A549 (cell line): ENCODE measurements at regions of chr17 and their contacts with region 1.

Region 1: DNA sequence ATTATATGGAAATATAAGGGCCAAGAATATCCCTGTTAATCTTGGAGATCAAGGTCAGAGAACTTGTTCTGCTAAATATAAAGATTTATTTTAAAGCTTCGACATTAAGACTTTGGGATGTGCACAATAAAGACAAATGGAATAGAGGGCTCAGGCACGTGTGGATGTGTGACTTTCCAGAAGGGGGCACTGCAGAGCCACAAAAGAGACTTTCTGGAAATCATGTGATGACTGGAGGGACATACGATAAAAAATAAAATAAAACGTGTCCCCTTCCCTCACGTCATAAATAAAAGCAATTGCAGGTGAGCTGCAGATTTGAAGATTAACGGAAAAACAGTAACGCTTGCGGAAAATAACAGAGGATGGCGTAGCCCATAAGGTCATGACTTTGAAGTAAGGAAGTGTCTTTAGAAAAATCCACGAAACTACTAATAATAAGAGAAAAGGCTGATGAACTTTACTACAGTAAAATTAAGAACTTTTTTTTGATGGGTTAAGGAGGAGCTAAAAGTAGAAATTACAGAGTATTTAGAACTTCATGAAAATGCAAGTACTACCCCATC is 9.4 kb upstream of the ENGASE start:
- DNase-seq: peak; percentile 57 to 73
- ATAC-seq: peak; percentile 64 to 81; a peak in 5 of 6 replicates
- H3K4me3 ChIP-seq: no peak overlapping the region
- H3K27ac ChIP-seq: no peak overlapping the region
- H3K4me1 ChIP-seq: no peaks in the 10 kb centered on the region
- CTCF ChIP-seq: peak; percentile 80
- EP300 ChIP-seq: no peak
- POLR2A ChIP-seq: no peak
- RAD21 ChIP-seq: peak; percentile 69 to 76

Region 2: GRCh38 chr17:79027925-79028813 is 37.0 kb before region 1 on chr17:
- CTCF ChIA-PET with region 1: interaction called, 19 read pairs
- POLR2A ChIA-PET with region 1: no interaction called
- DNase-seq: no peak
- ATAC-seq: peak in 1 of 2 experiments; percentile 34; a peak in 3 of 6 replicates
- H3K4me3 ChIP-seq: no peak overlapping the region
- H3K27ac ChIP-seq: peak overlapping the region; percentile 78 to 88
- H3K4me1 ChIP-seq: peaks cover 51% of the 10 kb centered on the region
- CTCF ChIP-seq: peak; percentile 48; the same call in 1 of the 3 replicates
- EP300 ChIP-seq: no peak
- POLR2A ChIP-seq: no peak
- RAD21 ChIP-seq: 0 out of 5 replicates have a peak, but pooled peaks have one; percentile 27 to 32